Esophagus muscularis mucosa (tissue), 4 donors: ENCODE measurements at regions of chr18 and their contacts with region 1.

Region 1: GRCh38 chr18:54119524-54120019 is 104.9 kb downstream of the MBD2 start:
- DNase-seq: no peak
- H3K4me3 ChIP-seq: no peak overlapping the region
- H3K27ac ChIP-seq: no peak overlapping the region
- H3K4me1 ChIP-seq: peaks cover 0 to 6% (median 0%) of the 10 kb centered on the region in 4 donors
- H3K27me3 ChIP-seq: no peaks in the 10 kb centered on the region
- CTCF ChIP-seq: peak; percentile 45 to 76 (median 70)
- EP300 ChIP-seq: no peak
- POLR2A ChIP-seq: no peak

Region 2: DNA sequence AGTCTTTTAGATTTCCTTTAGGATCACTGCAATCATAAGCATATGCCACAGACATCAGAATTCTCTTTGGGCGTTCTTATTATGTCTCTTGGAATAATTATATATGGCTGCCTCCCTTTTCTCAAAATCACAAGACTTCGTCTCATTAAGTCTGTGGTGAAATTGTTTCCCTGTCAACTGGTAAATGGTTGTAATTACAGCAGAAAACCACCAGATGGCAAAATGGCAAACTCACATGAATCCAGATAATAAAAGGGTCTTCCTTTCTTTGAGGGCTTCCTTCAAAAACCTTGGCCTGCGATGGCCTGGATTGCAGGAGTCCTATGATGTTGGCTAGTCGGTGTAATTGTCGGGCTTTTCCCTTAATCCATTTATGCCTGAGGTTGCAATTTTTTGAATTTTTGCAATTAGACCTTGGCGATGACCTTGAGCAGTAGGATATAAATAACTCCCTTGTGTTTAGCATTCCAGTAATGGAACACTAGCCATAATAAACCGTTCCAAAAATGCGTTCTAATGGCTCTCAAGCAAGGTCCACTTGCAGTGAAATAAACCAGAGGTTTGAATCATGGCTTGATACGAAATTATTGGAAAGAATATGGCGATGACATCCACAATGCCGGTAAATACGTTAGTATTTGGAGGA is 551.5 kb before region 1 on chr18:
- intact Hi-C with region 1: loop called (anchors 10 kb)
- DNase-seq: no peak
- H3K4me3 ChIP-seq: no peak overlapping the region
- H3K27ac ChIP-seq: no peak overlapping the region
- H3K4me1 ChIP-seq: peaks cover 0 to 6% (median 0%) of the 10 kb centered on the region in 4 donors
- H3K27me3 ChIP-seq: no peaks in the 10 kb centered on the region
- CTCF ChIP-seq: peak in 2 of 3 experiments; percentile 37 to 47
- EP300 ChIP-seq: no peak
- POLR2A ChIP-seq: no peak

Region 3: GRCh38 chr18:53698907-53699306 is 420.7 kb before region 1 on chr18:
- intact Hi-C with region 1: loop called (anchors 10 kb)
- DNase-seq: no peak
- H3K4me3 ChIP-seq: no peak overlapping the region
- H3K27ac ChIP-seq: no peak overlapping the region
- H3K4me1 ChIP-seq: no peaks in the 10 kb centered on the region
- H3K27me3 ChIP-seq: no peaks in the 10 kb centered on the region
- CTCF ChIP-seq: peak in 2 of 3 experiments; percentile 21 to 46
- EP300 ChIP-seq: no peak
- POLR2A ChIP-seq: no peak